ENCODE measurements at regions of chr9 and their contacts with region 1.

Region 1: DNA sequence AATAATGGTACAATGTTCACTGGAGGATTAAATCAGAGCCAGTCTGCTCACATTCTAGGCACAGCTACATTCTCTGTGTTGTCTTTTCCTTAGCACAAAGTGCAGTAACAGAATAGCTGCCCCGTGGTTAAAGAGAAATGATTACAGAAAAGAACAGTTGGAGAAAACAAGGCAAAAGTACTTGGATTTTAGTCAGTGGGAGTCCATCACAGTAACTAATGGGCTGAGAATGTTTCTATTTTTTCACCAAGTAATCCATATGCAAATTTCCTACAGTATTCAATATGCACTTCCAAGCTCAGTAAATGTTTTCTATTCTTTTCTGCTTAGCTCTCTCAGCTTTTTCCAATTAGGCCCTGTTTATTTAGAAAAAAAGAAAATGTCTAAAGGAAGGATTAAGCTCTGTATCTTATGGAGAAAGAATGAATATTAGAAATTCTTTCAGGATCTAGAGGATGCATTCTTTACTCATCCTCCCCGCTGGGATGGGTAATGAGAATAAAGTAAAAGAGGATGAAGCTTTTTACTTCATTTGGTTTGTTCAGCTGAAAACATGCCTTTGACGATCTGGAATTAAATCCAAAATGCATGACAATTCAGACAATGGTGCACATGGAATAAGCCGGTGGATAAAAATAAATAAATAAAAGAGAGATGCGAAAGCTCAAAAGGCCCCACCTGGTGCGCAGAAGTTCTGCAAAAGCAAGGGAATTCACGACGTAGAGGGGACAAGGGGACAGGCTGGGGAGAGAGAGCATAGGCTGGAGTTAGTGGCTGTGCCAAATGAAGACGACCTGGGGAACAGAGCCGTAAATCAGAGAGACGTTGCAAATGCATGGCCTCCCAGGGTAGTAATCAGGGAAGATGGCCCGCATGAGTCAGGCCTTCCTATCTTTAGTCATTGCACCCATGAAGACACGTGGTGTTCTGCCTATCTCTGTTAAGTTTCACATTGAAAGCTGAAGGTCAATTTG is 345.2 kb downstream of the GLIS3 start:
- DNase-seq: no peak
- H3K4me3 ChIP-seq: no peak overlapping the region
- H3K27ac ChIP-seq: no peak overlapping the region
- H3K4me1 ChIP-seq: no peaks in the 10 kb centered on the region
- H3K27me3 ChIP-seq: no peaks in the 10 kb centered on the region
- CTCF ChIP-seq: no peak

Region 2: DNA sequence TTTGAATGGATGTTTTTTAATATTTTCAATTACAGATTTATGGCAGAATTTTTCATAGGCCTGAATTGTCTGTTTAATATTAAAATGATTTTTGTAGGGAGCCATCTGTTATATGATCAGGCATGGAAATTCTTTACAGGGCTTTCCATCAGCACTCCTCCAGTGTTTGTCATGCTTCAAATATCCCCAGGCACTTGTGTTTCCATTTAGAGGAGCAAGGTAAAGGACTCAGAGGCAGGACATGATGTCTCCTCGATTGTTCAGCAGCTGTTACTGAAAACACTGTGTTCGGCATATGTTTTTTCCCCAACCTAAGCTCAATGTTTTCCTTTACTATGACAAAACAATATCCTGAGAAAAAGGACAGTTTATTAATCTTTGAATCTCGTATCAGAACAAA is 256.5 kb before region 1 on chr9:
- CTCF ChIA-PET with region 1: no interaction called
- dilution Hi-C with region 1: no loop called
- in situ Hi-C with region 1: no loop called
- intact Hi-C with region 1: no loop called
- DNase-seq: no peak
- H3K4me3 ChIP-seq: no peak overlapping the region
- H3K27ac ChIP-seq: no peak overlapping the region
- H3K4me1 ChIP-seq: no peaks in the 10 kb centered on the region
- H3K27me3 ChIP-seq: peaks cover 4% of the 10 kb centered on the region
- CTCF ChIP-seq: no peak

Region 3: DNA sequence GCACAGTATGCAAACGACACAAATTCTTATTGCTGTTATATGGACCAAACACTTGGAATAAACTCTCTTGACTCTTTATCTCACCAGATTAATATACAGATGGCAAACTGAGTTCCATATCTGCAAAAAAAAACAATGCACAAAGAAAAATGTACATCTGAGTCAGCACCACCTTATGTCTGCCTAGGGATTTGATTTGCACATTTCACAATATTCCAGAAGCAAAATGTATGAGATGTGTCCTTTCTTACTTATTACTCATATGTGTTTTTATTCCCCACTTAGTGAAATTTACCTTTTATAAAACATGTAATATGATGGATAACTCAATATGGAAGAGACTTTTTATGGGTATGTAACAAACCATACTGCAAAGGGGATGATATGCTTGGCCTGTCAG is 108.3 kb after region 1 on chr9:
- CTCF ChIA-PET with region 1: interaction called, 21 read pairs
- dilution Hi-C with region 1: no loop called
- in situ Hi-C with region 1: no loop called
- intact Hi-C with region 1: no loop called
- DNase-seq: peak; percentile 51
- H3K4me3 ChIP-seq: no peak overlapping the region
- H3K27ac ChIP-seq: no peak overlapping the region
- H3K4me1 ChIP-seq: peaks cover 7% of the 10 kb centered on the region
- H3K27me3 ChIP-seq: no peaks in the 10 kb centered on the region
- CTCF ChIP-seq: no peak

Measured in mammary epithelial cell (primary cell).